SK-N-SH (cell line): ENCODE measurements at regions of chr1 and their contacts with region 1.

Region 1: GRCh38 chr1:206489980-206490770 is 17.2 kb upstream of the RASSF5 start:
- DNase-seq: peak; percentile 87
- H3K4me3 ChIP-seq: peak overlapping the region in 1 of 2 experiments; percentile 31; a peak in 1 of 4 replicates
- H3K27ac ChIP-seq: peak overlapping the region in 1 of 2 experiments; percentile 11; a peak in 1 of 4 replicates
- H3K4me1 ChIP-seq: peaks cover 3 to 20% of the 10 kb centered on the region in 2 experiments; a peak in 2 of 4 replicates
- H3K27me3 ChIP-seq: no peaks in the 10 kb centered on the region
- CTCF ChIP-seq: peak; percentile 96
- EP300 ChIP-seq: no peak
- RAD21 ChIP-seq: peak; percentile 94

Region 2: GRCh38 chr1:206455666-206456344 is 34.4 kb before region 1 on chr1:
- CTCF ChIA-PET with region 1: interaction called, 17 read pairs
- POLR2A ChIA-PET with region 1: no interaction called
- DNase-seq: peak; percentile 83
- H3K4me3 ChIP-seq: no peak overlapping the region
- H3K27ac ChIP-seq: peak overlapping the region in 1 of 2 experiments; percentile 67; a peak in 2 of 4 replicates
- H3K4me1 ChIP-seq: peaks cover 22 to 33% of the 10 kb centered on the region in 2 experiments
- H3K27me3 ChIP-seq: no peaks in the 10 kb centered on the region
- CTCF ChIP-seq: no peak
- EP300 ChIP-seq: peak in 1 of 2 experiments; percentile 78; a peak in 2 of 4 replicates
- RAD21 ChIP-seq: no peak; the same call in 1 of the 2 replicates

Region 3: GRCh38 chr1:206507284-206508129 is 17.3 kb after region 1 on chr1 and contains the start of gene RASSF5:
- CTCF ChIA-PET with region 1: interaction called, 37 read pairs
- POLR2A ChIA-PET with region 1: no interaction called
- DNase-seq: peak; percentile 77
- H3K4me3 ChIP-seq: peak within 1 kb of the TSS; percentile 64 to 65
- H3K27ac ChIP-seq: no peak within 1 kb of the TSS
- H3K4me1 ChIP-seq: peaks cover 10 to 16% of the 10 kb centered on the region in 2 experiments; a peak in 2 of 4 replicates
- H3K27me3 ChIP-seq: no peaks in the 10 kb centered on the region
- CTCF ChIP-seq: no peak
- EP300 ChIP-seq: no peak
- RAD21 ChIP-seq: no peak
- polyA plus RNA-seq, gene RASSF5: 1.7 and 2.2 TPM in 2 replicates

Region 4: DNA sequence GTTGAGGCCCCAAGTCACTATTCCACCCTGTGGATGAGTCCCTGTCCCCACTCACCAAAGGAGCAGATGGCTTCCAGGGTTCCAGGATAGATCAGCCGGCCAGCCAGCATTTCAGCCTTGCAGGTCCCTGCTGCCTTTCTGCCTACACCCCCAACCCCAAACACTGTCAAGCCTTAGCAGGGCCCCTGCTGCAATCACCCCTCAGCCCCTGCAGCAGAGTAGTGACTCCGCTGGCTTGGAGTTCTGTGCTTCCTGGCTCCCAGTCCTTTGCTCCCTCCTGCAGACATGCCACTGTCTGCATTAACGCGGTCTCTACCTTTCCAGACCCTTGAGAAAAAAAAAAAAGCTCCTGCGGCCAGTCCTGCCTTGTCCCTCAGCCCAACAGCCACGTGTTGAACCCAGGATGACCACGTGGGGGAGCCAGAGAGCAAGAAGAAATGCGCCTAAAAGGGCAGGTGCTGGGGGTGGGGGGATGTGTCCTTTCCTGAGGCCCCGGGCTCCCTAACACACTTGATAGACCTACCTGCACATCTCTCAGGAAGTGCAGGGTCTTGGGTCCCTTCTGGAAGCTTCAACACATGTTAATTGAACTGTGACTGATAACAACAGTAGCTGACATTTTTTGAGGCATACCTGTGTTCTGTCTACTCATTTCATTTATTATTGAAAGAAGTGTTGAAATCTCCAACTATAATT is 54.5 kb after region 1 on chr1:
- CTCF ChIA-PET with region 1: interaction called, 39 read pairs
- POLR2A ChIA-PET with region 1: no interaction called
- DNase-seq: peak; percentile 86
- H3K4me3 ChIP-seq: no peak overlapping the region; a peak in 1 of 4 replicates
- H3K27ac ChIP-seq: no peak overlapping the region
- H3K4me1 ChIP-seq: no peaks in the 10 kb centered on the region; a peak in 1 of 4 replicates
- H3K27me3 ChIP-seq: no peaks in the 10 kb centered on the region; the same call in 1 of the 2 replicates
- CTCF ChIP-seq: peak; percentile 86
- EP300 ChIP-seq: no peak
- RAD21 ChIP-seq: peak; percentile 73

Region 5: DNA sequence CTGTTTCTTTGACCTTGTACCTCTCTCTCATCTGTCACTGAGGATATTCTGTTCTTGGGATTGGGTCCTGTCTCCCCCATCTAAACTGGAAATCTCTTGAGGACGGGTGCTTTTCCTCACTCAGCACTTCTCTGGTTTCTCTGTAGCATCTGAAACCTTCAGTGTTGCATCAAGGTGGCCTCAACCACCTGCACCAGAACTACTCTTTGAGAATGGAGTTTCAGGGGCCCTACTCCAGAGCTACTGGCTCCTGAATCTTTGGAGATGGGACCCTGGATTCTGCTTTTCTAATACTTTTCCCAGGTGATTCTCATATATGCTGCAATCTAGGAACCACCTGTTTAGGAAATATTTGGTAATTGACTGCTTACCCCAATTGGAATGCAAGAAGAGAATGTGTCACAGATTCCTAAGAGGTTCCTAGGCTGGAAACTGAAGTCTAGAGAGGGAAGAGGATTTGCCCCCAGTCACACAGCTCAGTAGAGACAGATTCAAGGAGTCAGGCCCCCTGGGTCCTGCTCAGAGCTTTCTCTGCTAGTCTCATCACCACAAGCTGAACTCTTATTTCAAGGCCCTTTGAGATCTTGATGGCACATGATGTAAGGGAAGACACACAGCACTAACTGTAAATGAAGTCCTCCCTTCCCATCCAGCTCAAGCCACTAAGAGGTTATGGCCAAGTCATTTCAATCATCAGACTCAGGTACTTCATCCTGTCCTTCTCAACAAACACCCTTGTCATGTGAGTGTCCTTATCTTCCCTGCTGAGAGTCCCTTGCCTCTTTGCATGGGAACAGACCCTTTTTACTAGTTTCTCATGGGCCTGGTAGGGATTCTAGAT is 73.4 kb after region 1 on chr1:
- CTCF ChIA-PET with region 1: interaction called, 12 read pairs
- POLR2A ChIA-PET with region 1: no interaction called
- DNase-seq: no peak
- H3K4me3 ChIP-seq: no peak overlapping the region
- H3K27ac ChIP-seq: no peak overlapping the region
- H3K4me1 ChIP-seq: no peaks in the 10 kb centered on the region
- H3K27me3 ChIP-seq: no peaks in the 10 kb centered on the region
- CTCF ChIP-seq: no peak
- EP300 ChIP-seq: no peak
- RAD21 ChIP-seq: no peak

Region 6: GRCh38 chr1:206600527-206600926 is 110.4 kb after region 1 on chr1:
- CTCF ChIA-PET with region 1: interaction called, 22 read pairs
- POLR2A ChIA-PET with region 1: no interaction called
- DNase-seq: no peak
- H3K4me3 ChIP-seq: no peak overlapping the region
- H3K27ac ChIP-seq: no peak overlapping the region
- H3K4me1 ChIP-seq: no peaks in the 10 kb centered on the region
- H3K27me3 ChIP-seq: no peaks in the 10 kb centered on the region
- CTCF ChIP-seq: no peak
- EP300 ChIP-seq: no peak
- RAD21 ChIP-seq: no peak

Region 7: DNA sequence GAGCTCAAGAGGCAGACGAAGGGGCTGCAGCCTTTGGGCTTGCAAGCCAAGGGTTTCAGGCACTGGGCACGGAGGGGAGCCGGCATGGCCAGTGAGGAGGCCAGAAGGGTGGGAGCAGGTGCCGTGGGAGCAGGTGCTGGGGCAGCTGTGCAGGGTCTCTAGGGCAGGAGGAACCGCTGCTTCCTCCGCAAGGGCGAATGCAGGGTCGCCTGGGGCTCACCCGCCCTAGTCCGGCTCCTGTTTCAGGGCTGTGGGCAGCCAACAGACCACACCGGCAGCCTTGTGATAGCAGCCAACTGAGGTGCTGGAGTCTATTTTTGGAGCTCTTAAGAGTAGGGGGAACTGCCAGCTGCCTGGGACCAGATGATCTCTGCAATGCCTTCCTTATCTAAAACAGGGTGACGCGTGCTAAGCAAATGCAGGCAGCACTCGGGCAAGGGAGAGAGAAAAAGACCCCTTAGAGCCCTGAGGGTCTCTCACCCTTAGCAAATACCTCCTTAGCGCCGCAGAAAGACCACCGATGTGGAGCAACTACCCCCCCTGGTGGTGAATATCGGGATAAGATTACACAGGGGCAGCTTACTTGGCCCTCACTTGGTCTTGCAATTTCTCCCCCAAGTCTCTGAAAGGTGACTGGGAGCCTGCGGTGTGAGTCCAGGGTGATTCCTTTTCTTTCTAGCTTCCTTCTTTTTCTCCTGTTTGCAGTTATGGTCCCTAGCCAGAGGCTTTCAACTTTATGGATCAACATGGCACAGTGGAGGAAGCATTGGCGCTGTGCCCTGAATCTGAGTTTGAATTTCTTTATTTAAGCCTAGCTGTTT is 173.9 kb after region 1 on chr1:
- CTCF ChIA-PET with region 1: interaction called, 27 read pairs
- POLR2A ChIA-PET with region 1: no interaction called
- DNase-seq: peak; percentile 84
- H3K4me3 ChIP-seq: peak overlapping the region; percentile 8 to 39; a peak in 2 of 4 replicates
- H3K27ac ChIP-seq: no peak overlapping the region
- H3K4me1 ChIP-seq: peaks cover 0 to 6% of the 10 kb centered on the region in 2 experiments; a peak in 1 of 4 replicates
- H3K27me3 ChIP-seq: peaks cover 23% of the 10 kb centered on the region; the same call in 1 of the 2 replicates
- CTCF ChIP-seq: peak; percentile 89
- EP300 ChIP-seq: no peak
- RAD21 ChIP-seq: peak; percentile 89